Left colon (tissue), 2 donors: ENCODE measurements at regions of chr1 and their contacts with region 1.

Region 1: DNA sequence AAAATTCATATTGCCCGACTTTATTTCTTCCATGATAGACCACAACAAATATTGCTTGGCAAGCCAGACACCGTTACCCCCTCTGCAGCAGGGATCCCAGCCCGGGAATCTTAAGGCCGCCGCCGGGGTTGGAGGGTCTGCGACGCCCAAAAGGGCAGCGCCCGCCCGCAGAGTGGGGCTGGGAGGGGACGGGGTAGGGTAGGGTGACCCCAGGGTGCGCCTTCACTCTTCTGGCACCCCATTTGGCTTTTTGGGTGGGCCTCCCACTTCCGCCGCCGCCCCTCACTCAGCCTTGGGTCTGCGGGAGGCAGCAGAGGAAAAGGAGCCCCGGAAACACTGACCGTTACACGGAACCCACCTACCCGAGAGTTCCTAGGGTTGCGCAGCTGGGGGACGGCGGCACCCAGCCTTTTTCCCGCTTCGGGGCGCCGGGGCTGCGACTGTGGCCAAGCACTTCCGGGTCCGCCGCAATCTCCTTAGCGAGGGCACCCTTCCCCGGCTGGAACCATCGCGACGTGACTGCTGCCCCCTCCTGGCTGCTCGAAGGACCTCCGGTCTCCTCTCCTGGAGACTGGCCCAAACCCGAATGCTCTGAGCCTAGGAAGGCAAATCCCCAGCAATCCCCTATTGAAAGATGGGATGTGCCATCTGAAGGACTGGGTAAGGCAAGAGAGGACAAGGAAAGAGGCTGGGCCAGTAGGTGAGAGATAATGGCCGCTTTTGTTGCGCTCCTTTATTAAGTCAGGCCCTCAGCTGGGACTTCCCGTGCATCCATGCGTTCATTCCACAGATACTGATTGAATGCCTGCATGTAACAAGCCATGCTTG is at the start of gene PIGC:
- DNase-seq: peak; percentile 89 to 95
- ATAC-seq: peak; percentile 99
- total RNA-seq, gene PIGC: 22.9 to 24.1 TPM

Region 2: GRCh38 chr1:171801487-171801891 is 642.4 kb before region 1 on chr1:
- intact Hi-C with region 1: loop called in 1 of 2 experiments (anchors 10 kb)
- DNase-seq: no peak
- ATAC-seq: peak; percentile 67